ENCODE measurements at regions of chr19 and their contacts with region 1.

Region 1: GRCh38 chr19:984165-984967 is at the start of gene WDR18:
- DNase-seq: peak; percentile 79
- ATAC-seq: peak; percentile 58
- H3K4me3 ChIP-seq: peak within 1 kb of the TSS; percentile 86 to 98 (median 95)
- H3K27ac ChIP-seq: peak within 1 kb of the TSS; percentile 85
- H3K4me1 ChIP-seq: peaks cover 44% of the 10 kb centered on the region
- H3K27me3 ChIP-seq: no peaks in the 10 kb centered on the region
- CTCF ChIP-seq: peak; percentile 37
- EP300 ChIP-seq: no peak
- POLR2A ChIP-seq: peak; percentile 69 to 77; a peak in 3 of 4 replicates
- RAD21 ChIP-seq: peak; percentile 58
- total RNA-seq, gene WDR18: 47.6 and 49.7 TPM in 2 replicates

Region 2: DNA sequence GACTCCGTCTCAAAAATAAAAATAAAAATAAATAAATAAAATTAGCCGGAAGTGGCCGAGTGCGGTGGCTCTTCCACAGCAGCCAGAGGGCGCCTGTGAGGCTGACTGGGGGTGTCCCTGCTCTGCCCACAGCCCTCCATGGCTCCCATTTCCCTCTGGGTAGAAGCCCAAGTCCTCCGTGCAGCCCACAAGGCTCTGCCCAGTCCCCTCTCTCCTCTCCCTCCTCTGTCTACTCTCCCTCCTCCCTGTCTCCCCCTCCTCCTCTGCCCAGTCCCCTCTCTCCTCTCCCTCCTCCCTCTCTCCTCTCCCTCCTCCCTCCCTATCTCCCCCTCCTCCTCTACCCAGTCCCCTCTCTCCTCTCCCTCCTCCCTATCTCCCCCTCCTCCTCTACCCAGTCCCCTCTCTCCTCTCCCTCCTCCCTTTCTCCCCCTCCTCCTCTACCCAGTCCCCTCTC is 213.0 kb before region 1 on chr19:
- CTCF ChIA-PET with region 1: no interaction called
- POLR2A ChIA-PET with region 1: no interaction called
- in situ Hi-C with region 1: loop called (anchors 10 kb)
- intact Hi-C with region 1: no loop called
- DNase-seq: peak; percentile 63
- ATAC-seq: peak; percentile 70
- H3K4me3 ChIP-seq: no peak overlapping the region
- H3K27ac ChIP-seq: no peak overlapping the region
- H3K4me1 ChIP-seq: peaks cover 27% of the 10 kb centered on the region
- H3K27me3 ChIP-seq: no peaks in the 10 kb centered on the region; a peak in 1 of 5 replicates
- CTCF ChIP-seq: peak; percentile 65
- EP300 ChIP-seq: no peak
- POLR2A ChIP-seq: no peak
- RAD21 ChIP-seq: peak; percentile 58

Region 3: DNA sequence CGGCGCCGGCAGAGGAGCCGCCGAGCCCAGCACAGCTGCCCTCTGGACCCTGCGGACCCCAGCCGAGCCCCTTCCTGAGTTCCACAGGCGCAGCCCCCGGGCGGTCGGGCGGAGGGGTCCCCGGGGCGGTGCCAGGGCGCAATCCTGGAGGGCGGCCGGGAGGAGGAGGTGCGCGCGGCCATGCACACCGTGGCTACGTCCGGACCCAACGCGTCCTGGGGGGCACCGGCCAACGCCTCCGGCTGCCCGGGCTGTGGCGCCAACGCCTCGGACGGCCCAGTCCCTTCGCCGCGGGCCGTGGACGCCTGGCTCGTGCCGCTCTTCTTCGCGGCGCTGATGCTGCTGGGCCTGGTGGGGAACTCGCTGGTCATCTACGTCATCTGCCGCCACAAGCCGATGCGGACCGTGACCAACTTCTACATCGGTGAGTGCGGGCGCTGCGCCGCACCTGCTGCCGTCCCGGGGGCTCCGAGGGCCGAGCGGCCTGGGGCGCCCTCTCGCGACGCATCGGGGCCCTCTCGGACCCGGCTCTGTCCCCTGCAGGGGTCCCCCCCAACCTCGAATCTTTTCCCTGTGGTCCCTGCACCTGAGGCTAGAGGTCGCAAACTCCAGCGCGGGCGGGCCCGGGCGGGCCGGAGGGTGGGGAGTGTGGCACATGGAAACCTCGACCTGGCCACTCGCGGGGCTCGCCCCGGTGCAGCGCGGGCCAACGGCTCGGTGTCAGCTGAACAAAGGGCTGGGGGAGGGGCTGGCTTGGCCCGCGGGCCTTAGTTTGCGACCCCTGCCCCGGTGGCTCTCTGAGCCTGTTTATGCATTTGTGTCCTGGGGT is 66.8 kb before region 1 on chr19 and contains the start of gene KISS1R:
- CTCF ChIA-PET with region 1: interaction called, 78 read pairs
- POLR2A ChIA-PET with region 1: interaction called, 61 read pairs
- in situ Hi-C with region 1: loop called (anchors 5 kb)
- intact Hi-C with region 1: loop called (anchors 1 kb)
- DNase-seq: peak; percentile 71
- ATAC-seq: peak; percentile 74
- H3K4me3 ChIP-seq: peak within 1 kb of the TSS; percentile 52 to 96 (median 57)
- H3K27ac ChIP-seq: peak within 1 kb of the TSS; percentile 71
- H3K4me1 ChIP-seq: peaks cover 24% of the 10 kb centered on the region
- H3K27me3 ChIP-seq: no peaks in the 10 kb centered on the region; a peak in 1 of 5 replicates
- CTCF ChIP-seq: peak; percentile 90
- EP300 ChIP-seq: no peak
- POLR2A ChIP-seq: peak in 1 of 2 experiments; percentile 76; a peak in 2 of 4 replicates
- RAD21 ChIP-seq: peak; percentile 92
- total RNA-seq, gene KISS1R: 3.9 and 10.2 TPM in 2 replicates

Region 4: DNA sequence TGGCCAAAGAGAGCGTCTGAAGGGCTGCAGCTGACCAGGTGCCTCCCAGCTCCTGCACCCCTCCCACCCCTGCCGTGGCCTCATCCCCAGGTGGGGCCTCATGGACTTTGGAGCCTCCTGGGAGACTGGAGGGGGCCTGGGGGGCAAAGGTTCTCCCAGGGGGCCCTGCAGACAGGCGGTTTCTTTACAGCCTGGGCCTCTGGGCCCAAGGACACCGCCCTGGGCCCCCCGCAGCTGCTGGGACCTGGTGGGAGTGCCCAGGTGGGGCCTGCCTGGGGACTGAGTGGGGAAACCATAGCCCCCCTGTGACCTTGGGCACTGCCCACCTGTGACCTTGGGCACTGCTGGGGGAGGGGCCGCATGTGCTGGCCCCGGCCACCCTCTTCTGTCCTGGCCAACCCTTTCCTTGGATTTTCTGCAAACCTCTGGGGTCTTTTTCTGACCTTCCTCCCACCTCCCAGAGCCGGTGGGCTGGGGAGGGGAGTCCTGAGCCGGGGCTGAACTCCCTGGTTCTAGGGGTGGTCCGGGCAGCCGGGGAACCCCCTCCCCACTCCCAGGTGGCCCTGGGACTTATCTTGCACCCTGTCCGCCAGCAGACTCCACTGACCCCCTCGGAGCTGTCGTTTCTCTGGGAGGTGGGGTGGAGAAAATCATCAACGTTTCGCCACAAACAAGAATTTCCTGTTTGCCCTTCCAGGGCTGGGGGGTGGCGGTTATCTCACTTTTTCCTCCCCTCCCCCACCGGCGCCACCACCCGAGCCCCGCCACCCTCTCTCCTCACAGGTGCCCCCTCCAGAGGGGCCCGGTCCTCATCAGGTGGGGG is 31.5 kb before region 1 on chr19:
- CTCF ChIA-PET with region 1: no interaction called
- POLR2A ChIA-PET with region 1: interaction called, 15 read pairs
- in situ Hi-C with region 1: no loop called
- intact Hi-C with region 1: no loop called
- DNase-seq: peak; percentile 95
- ATAC-seq: peak; percentile 82
- H3K4me3 ChIP-seq: peak overlapping the region; percentile 31 to 70 (median 36); a peak in 5 of 6 replicates
- H3K27ac ChIP-seq: peak overlapping the region; percentile 99
- H3K4me1 ChIP-seq: peaks cover 86% of the 10 kb centered on the region
- H3K27me3 ChIP-seq: no peaks in the 10 kb centered on the region
- CTCF ChIP-seq: peak; percentile 32; the same call in 1 of the 2 replicates
- EP300 ChIP-seq: peak; percentile 98 to 99
- POLR2A ChIP-seq: peak; percentile 55 to 59; a peak in 3 of 4 replicates
- RAD21 ChIP-seq: peak; percentile 82

Region 5: GRCh38 chr19:996051-996838 is 11.9 kb after region 1 on chr19:
- CTCF ChIA-PET with region 1: no interaction called
- POLR2A ChIA-PET with region 1: interaction called, 14 read pairs
- in situ Hi-C with region 1: no loop called
- intact Hi-C with region 1: no loop called
- DNase-seq: no peak
- ATAC-seq: no peak
- H3K4me3 ChIP-seq: no peak overlapping the region
- H3K27ac ChIP-seq: no peak overlapping the region
- H3K4me1 ChIP-seq: peaks cover 47% of the 10 kb centered on the region
- H3K27me3 ChIP-seq: peaks cover 3 to 19% of the 10 kb centered on the region in 2 experiments; a peak in 4 of 5 replicates
- CTCF ChIP-seq: no peak
- EP300 ChIP-seq: no peak
- POLR2A ChIP-seq: no peak
- RAD21 ChIP-seq: no peak

Region 6: GRCh38 chr19:1006711-1007398 is 22.5 kb after region 1 on chr19:
- CTCF ChIA-PET with region 1: no interaction called
- POLR2A ChIA-PET with region 1: no interaction called
- in situ Hi-C with region 1: no loop called
- intact Hi-C with region 1: no loop called
- DNase-seq: no peak
- ATAC-seq: 0 out of 3 replicates have a peak, but pooled peaks have one; percentile 5
- H3K4me3 ChIP-seq: no peak overlapping the region
- H3K27ac ChIP-seq: no peak overlapping the region
- H3K4me1 ChIP-seq: peaks cover 13% of the 10 kb centered on the region
- H3K27me3 ChIP-seq: peaks cover 10 to 28% of the 10 kb centered on the region in 2 experiments
- CTCF ChIP-seq: no peak
- EP300 ChIP-seq: no peak
- POLR2A ChIP-seq: no peak
- RAD21 ChIP-seq: no peak

Region 7: GRCh38 chr19:1032264-1032867 is 48.0 kb after region 1 on chr19:
- CTCF ChIA-PET with region 1: no interaction called
- POLR2A ChIA-PET with region 1: no interaction called
- in situ Hi-C with region 1: no loop called
- intact Hi-C with region 1: no loop called
- DNase-seq: no peak
- ATAC-seq: no peak
- H3K4me3 ChIP-seq: no peak overlapping the region
- H3K27ac ChIP-seq: no peak overlapping the region
- H3K4me1 ChIP-seq: peaks cover 13% of the 10 kb centered on the region; the same call in 1 of the 2 replicates
- H3K27me3 ChIP-seq: no peaks in the 10 kb centered on the region
- CTCF ChIP-seq: no peak
- EP300 ChIP-seq: no peak
- POLR2A ChIP-seq: no peak
- RAD21 ChIP-seq: no peak

Measured in HepG2 (cell line).